Naive thymus-derived CD4-positive, alpha-beta T cell (primary cell): ENCODE measurements at regions of chr17 and their contacts with region 1.

Region 1: GRCh38 chr17:409848-410545 is 57.4 kb upstream of the RPH3AL start:
- DNase-seq: peak; percentile 97 to 100 (median 99)
- ATAC-seq: peak; percentile 62
- H3K4me3 ChIP-seq: peak overlapping the region; percentile 77
- H3K4me3 Mint-ChIP-seq: peak overlapping the region; percentile 91 to 97 (median 94)
- H3K27ac ChIP-seq: peak overlapping the region; percentile 88
- H3K27ac Mint-ChIP-seq: peak overlapping the region; percentile 90 to 99 (median 98)
- H3K4me1 ChIP-seq: peaks cover 36 to 37% of the 10 kb centered on the region in 2 donors
- H3K4me1 Mint-ChIP-seq: peaks cover 53 to 76% (median 72%) of the 10 kb centered on the region in 7 donors
- H3K27me3 ChIP-seq: no peaks in the 10 kb centered on the region
- H3K27me3 Mint-ChIP-seq: peaks cover 0 to 7% (median 0%) of the 10 kb centered on the region in 5 donors

Region 2: GRCh38 chr17:336110-337021 is 73.6 kb before region 1 on chr17:
- CTCF ChIA-PET with region 1: no interaction called
- POLR2A ChIA-PET with region 1: no interaction called
- intact Hi-C with region 1: no loop called
- DNase-seq: peak in 7 of 9 donors; percentile 5 to 77 (median 66)
- ATAC-seq: peak; percentile 73
- H3K4me3 ChIP-seq: no peak overlapping the region
- H3K4me3 Mint-ChIP-seq: peak overlapping the region in 9 of 10 donors; percentile 47 to 86 (median 74)
- H3K27ac ChIP-seq: peak overlapping the region; percentile 58
- H3K27ac Mint-ChIP-seq: peak overlapping the region in 7 of 9 donors; percentile 89 to 99 (median 94)
- H3K4me1 ChIP-seq: peaks cover 0 to 35% of the 10 kb centered on the region in 2 donors
- H3K4me1 Mint-ChIP-seq: peaks cover 10 to 69% (median 28%) of the 10 kb centered on the region in 7 donors
- H3K27me3 ChIP-seq: no peaks in the 10 kb centered on the region
- H3K27me3 Mint-ChIP-seq: peaks cover 0 to 32% (median 15%) of the 10 kb centered on the region in 5 donors

Region 3: DNA sequence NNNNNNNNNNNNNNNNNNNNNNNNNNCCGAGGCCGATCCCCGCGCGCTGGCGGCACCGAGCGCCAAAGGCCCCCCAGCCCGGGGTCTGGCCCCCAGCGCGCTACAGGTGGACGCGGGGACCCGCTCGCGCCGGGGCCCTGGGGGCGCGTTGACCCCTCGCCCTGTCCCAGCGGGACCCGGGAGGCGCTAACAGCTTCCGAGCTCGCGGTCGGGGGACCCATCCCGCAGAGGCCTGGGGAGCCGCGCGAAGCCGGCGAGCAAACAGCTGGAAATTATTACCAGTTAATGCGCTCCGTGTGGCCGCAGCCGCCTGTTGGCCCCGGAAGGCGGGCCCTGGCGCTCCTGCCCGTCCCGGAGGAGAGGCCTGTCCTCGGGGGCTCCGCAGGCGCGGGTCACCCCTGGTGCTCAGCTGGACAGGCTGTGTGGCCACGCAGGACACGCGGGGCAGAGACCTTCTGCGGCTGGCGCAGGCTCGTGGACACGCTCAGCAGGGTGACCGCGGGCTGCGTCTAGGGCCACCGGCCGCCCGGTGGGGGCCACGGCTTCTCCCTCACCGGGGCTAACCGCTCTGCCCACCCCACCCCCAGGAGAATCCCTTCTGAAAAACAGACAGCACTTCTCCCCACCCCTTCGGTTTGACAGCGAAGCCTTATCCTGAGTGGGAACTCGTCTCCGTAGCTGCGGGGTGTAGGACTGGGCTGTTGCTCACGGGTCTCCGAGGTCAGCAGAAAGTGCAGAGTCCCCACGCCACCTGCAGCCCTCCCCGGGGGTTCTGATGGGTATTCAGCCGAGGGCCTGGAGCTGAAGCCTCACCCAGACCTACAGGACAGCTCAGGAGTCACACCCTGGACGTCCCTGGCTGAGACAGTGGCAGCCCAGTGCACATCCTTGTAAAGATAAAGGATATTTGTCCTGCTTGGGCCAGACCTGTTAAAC is 81.4 kb after region 1 on chr17:
- CTCF ChIA-PET with region 1: interaction called, 14 read pairs
- POLR2A ChIA-PET with region 1: interaction called, 16 read pairs
- intact Hi-C with region 1: no loop called
- DNase-seq: peak in 8 of 9 donors; percentile 15 to 67 (median 49)
- ATAC-seq: peak; percentile 34
- H3K4me3 ChIP-seq: peak overlapping the region; percentile 39
- H3K4me3 Mint-ChIP-seq: peak overlapping the region; percentile 33 to 88 (median 71)
- H3K27ac ChIP-seq: peak overlapping the region; percentile 36
- H3K27ac Mint-ChIP-seq: peak overlapping the region; percentile 45 to 91 (median 72)
- H3K4me1 ChIP-seq: peaks cover 0 to 12% of the 10 kb centered on the region in 2 donors
- H3K4me1 Mint-ChIP-seq: peaks cover 6 to 21% (median 12%) of the 10 kb centered on the region in 7 donors
- H3K27me3 ChIP-seq: no peaks in the 10 kb centered on the region
- H3K27me3 Mint-ChIP-seq: peaks cover 0 to 13% (median 0%) of the 10 kb centered on the region in 5 donors

Region 4: DNA sequence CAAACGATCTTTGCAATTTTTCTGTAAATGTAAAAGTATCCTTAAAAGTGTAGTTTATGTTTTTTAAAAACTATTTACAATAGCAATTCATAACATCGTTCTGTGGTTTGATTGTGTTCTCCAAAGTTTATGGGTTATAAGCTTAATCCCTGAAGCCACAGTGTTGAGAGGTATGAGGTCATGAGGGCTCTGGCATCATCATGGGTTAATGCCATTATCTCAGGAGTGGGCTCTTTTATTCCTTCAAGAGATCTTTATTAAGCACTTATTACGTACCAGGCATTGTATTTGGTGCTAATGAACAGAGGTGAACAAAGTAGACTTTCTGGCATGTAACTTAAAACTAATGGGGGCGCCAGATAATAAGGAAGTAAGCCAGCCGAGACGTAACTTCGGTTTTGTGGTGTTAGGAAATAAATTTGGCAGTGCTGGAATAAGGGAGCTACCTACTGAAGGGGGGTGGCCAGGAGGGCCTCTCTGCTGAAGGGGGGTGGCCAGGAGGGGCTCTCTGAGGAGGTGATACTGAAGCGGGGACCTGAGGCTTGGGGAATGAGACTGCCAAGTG is 146.5 kb after region 1 on chr17:
- CTCF ChIA-PET with region 1: interaction called, 5 read pairs
- POLR2A ChIA-PET with region 1: interaction called, 3 read pairs
- intact Hi-C with region 1: loop called in 1 of 2 experiments (anchors 2 kb)
- DNase-seq: no peak
- ATAC-seq: no peak
- H3K4me3 ChIP-seq: no peak overlapping the region
- H3K4me3 Mint-ChIP-seq: no peak overlapping the region
- H3K27ac ChIP-seq: no peak overlapping the region
- H3K27ac Mint-ChIP-seq: no peak overlapping the region
- H3K4me1 ChIP-seq: no peaks in the 10 kb centered on the region
- H3K4me1 Mint-ChIP-seq: peaks cover 0 to 20% (median 0%) of the 10 kb centered on the region in 7 donors
- H3K27me3 ChIP-seq: no peaks in the 10 kb centered on the region
- H3K27me3 Mint-ChIP-seq: no peaks in the 10 kb centered on the region

Region 5: GRCh38 chr17:681738-682529 is 271.9 kb after region 1 on chr17:
- CTCF ChIA-PET with region 1: interaction called, 15 read pairs
- POLR2A ChIA-PET with region 1: no interaction called
- intact Hi-C with region 1: loop called in 1 of 2 experiments (anchors 1 kb)
- DNase-seq: peak in 5 of 9 donors; percentile 6 to 21 (median 11)
- ATAC-seq: no peak
- H3K4me3 ChIP-seq: no peak overlapping the region
- H3K4me3 Mint-ChIP-seq: peak overlapping the region; percentile 1 to 81 (median 54)
- H3K27ac ChIP-seq: peak overlapping the region; percentile 14
- H3K27ac Mint-ChIP-seq: peak overlapping the region in 8 of 9 donors; percentile 3 to 85 (median 52)
- H3K4me1 ChIP-seq: peaks cover 0 to 21% of the 10 kb centered on the region in 2 donors
- H3K4me1 Mint-ChIP-seq: peaks cover 18 to 39% (median 29%) of the 10 kb centered on the region in 7 donors
- H3K27me3 ChIP-seq: no peaks in the 10 kb centered on the region
- H3K27me3 Mint-ChIP-seq: no peaks in the 10 kb centered on the region

Region 6: GRCh38 chr17:700504-701094 is 290.6 kb after region 1 on chr17:
- CTCF ChIA-PET with region 1: interaction called, 63 read pairs
- POLR2A ChIA-PET with region 1: interaction called, 19 read pairs
- intact Hi-C with region 1: loop called (anchors 1 kb)
- DNase-seq: peak in 7 of 9 donors; percentile 25 to 63 (median 58)
- ATAC-seq: peak; percentile 71
- H3K4me3 ChIP-seq: no peak overlapping the region
- H3K4me3 Mint-ChIP-seq: no peak overlapping the region
- H3K27ac ChIP-seq: no peak overlapping the region
- H3K27ac Mint-ChIP-seq: peak overlapping the region in 3 of 9 donors; percentile 46 to 53 (median 51)
- H3K4me1 ChIP-seq: no peaks in the 10 kb centered on the region
- H3K4me1 Mint-ChIP-seq: peaks cover 0 to 14% (median 6%) of the 10 kb centered on the region in 7 donors
- H3K27me3 ChIP-seq: no peaks in the 10 kb centered on the region
- H3K27me3 Mint-ChIP-seq: no peaks in the 10 kb centered on the region

Region 7: GRCh38 chr17:781805-782731 is 372.1 kb after region 1 on chr17 and contains the starts of genes GLOD4 and MRM3:
- CTCF ChIA-PET with region 1: no interaction called
- POLR2A ChIA-PET with region 1: interaction called, 3 read pairs
- intact Hi-C with region 1: loop called in 1 of 2 experiments (anchors 1 kb)
- DNase-seq: peak; percentile 92 to 100 (median 96)
- ATAC-seq: peak; percentile 98
- H3K4me3 ChIP-seq: peak within 1 kb of the TSS; percentile 88
- H3K4me3 Mint-ChIP-seq: peak within 1 kb of the TSS; percentile 95 to 98 (median 97)
- H3K27ac ChIP-seq: peak within 1 kb of the TSS; percentile 84
- H3K27ac Mint-ChIP-seq: peak within 1 kb of the TSS; percentile 95 to 98 (median 97)
- H3K4me1 ChIP-seq: peaks cover 16 to 24% of the 10 kb centered on the region in 2 donors
- H3K4me1 Mint-ChIP-seq: peaks cover 13 to 54% (median 38%) of the 10 kb centered on the region in 7 donors
- H3K27me3 ChIP-seq: no peaks in the 10 kb centered on the region
- H3K27me3 Mint-ChIP-seq: no peaks in the 10 kb centered on the region
- total RNA-seq, gene GLOD4: 60.1 to 79.0 (median 77.6) TPM
- total RNA-seq, gene MRM3: 19.3 to 47.1 (median 25.9) TPM

Region 8: DNA sequence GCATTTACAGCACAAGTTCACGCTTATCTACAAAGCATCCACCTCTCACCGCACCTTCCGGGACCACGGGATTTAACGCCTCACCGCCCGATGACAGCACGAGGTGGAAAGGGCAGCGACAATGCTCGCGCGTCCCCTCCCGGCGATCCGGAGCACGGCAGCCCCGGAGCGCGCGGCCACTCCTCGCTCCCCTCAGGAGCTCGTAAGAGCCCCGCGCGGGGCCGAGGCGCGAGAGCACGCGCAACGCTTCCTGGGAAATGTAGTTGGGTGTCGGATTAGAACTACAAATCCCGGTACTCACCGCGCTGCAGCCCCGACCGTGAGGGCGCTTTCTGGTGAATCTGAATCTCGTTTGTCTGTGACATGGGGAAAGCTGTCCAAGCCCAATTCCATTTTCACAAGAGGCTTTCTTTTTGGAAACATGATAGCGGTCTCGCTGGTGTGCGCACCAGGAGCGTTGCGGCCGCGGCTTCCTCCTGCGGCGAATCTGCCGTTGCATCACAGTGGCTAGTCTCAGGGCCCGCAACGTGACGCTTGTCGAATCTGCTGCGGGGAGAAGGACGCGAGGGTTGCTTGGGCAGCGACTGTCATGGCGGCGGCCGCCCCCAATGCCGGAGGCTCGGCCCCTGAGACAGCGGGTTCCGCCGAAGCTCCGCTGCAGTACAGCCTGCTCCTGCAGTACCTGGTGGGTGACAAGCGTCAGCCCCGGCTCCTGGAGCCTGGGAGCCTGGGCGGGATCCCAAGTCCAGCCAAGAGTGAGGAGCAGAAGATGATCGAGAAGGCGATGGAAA is 586.8 kb after region 1 on chr17 and contains the start of gene TIMM22:
- CTCF ChIA-PET with region 1: no interaction called
- POLR2A ChIA-PET with region 1: no interaction called
- intact Hi-C with region 1: loop called (anchors 1 to 2 kb)
- DNase-seq: peak; percentile 85 to 97 (median 93)
- ATAC-seq: peak; percentile 97
- H3K4me3 ChIP-seq: peak within 1 kb of the TSS; percentile 98
- H3K4me3 Mint-ChIP-seq: peak within 1 kb of the TSS; percentile 96 to 100 (median 98)
- H3K27ac ChIP-seq: peak within 1 kb of the TSS; percentile 87
- H3K27ac Mint-ChIP-seq: peak within 1 kb of the TSS; percentile 96 to 99 (median 98)
- H3K4me1 ChIP-seq: peaks cover 14 to 16% of the 10 kb centered on the region in 2 donors
- H3K4me1 Mint-ChIP-seq: peaks cover 13 to 32% (median 24%) of the 10 kb centered on the region in 7 donors
- H3K27me3 ChIP-seq: no peaks in the 10 kb centered on the region
- H3K27me3 Mint-ChIP-seq: peaks cover 0 to 2% (median 0%) of the 10 kb centered on the region in 5 donors
- total RNA-seq, gene TIMM22: 8.3 to 13.5 (median 11.3) TPM